HCT116 (cell line): ENCODE measurements at regions of chr7 and their contacts with region 1.

Region 1: GRCh38 chr7:65453341-65454030 is 79.8 kb downstream of the ZNF92 start:
- DNase-seq: no peak
- ATAC-seq: no peak
- H3K4me3 ChIP-seq: no peak overlapping the region
- H3K27ac ChIP-seq: no peak overlapping the region
- H3K4me1 ChIP-seq: no peaks in the 10 kb centered on the region; a peak in 1 of 4 replicates
- H3K27me3 ChIP-seq: no peaks in the 10 kb centered on the region
- CTCF ChIP-seq: no peak
- POLR2A ChIP-seq: no peak
- RAD21 ChIP-seq: no peak

Region 2: GRCh38 chr7:65509368-65510186 is 56.1 kb after region 1 on chr7:
- CTCF ChIA-PET with region 1: no interaction called
- POLR2A ChIA-PET with region 1: no interaction called
- RAD21 ChIA-PET with region 1: no interaction called
- intact Hi-C with region 1: loop called (anchors 10 kb)
- DNase-seq: no peak
- ATAC-seq: no peak
- H3K4me3 ChIP-seq: no peak overlapping the region
- H3K27ac ChIP-seq: no peak overlapping the region
- H3K4me1 ChIP-seq: no peaks in the 10 kb centered on the region
- H3K27me3 ChIP-seq: no peaks in the 10 kb centered on the region
- CTCF ChIP-seq: no peak
- POLR2A ChIP-seq: no peak
- RAD21 ChIP-seq: no peak

Region 3: GRCh38 chr7:66099616-66100474 is 646.4 kb after region 1 on chr7:
- CTCF ChIA-PET with region 1: no interaction called
- POLR2A ChIA-PET with region 1: no interaction called
- RAD21 ChIA-PET with region 1: no interaction called
- intact Hi-C with region 1: no loop called
- DNase-seq: peak; percentile 86
- ATAC-seq: peak; percentile 84
- H3K4me3 ChIP-seq: peak overlapping the region; percentile 54 to 62
- H3K27ac ChIP-seq: peak overlapping the region; percentile 99
- H3K4me1 ChIP-seq: peaks cover 33 to 55% of the 10 kb centered on the region in 2 experiments
- H3K27me3 ChIP-seq: no peaks in the 10 kb centered on the region
- CTCF ChIP-seq: no peak
- POLR2A ChIP-seq: peak; percentile 68
- RAD21 ChIP-seq: no peak